Activated CD4-positive, alpha-beta memory T cell treated with anti-CD3 and anti-CD28 coated beads for 36 hours (primary cell): ENCODE measurements at regions of chr11 and their contacts with region 1.

Region 1: DNA sequence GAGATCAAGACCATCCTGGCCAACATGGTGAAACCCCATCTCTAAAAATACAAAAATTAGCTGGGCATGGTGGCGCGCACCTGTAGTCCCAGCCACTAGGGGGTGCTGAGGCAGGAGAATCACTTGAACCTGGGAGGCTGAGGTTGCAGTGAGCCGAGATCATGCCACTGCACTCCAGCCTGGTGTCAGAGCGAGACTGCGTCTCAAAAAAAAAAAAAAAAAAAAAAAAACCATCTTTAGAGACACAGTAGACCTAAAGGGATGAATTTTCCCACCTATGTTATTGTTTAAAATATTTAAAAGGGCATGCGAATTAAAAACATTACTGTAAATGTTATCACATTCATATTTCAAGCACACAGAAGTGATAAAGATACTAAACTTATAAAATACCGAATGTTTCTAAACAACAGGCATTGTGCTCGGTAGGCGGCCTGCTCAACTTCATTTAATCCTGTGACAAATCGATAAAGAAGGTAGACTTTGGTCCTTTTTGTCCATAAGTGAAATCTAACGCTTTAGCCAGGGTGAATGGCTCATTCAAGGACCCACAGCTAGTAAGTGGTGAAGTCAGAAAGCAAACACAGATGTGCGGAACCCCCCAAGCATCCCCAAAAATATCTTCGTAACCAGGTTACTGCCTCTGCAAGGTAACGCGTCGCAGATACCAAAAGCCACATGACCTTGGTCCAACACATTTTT is 16.1 kb downstream of the NCAPD3 start:
- DNase-seq: peak; percentile 76
- H3K4me3 Mint-ChIP-seq: no peak overlapping the region
- H3K27ac Mint-ChIP-seq: no peak overlapping the region
- H3K4me1 Mint-ChIP-seq: peaks cover 2% of the 10 kb centered on the region
- H3K27me3 Mint-ChIP-seq: no peaks in the 10 kb centered on the region

Region 2: GRCh38 chr11:134196756-134197155 is 10.9 kb before region 1 on chr11:
- CTCF ChIA-PET with region 1: interaction called, 12 read pairs
- POLR2A ChIA-PET with region 1: no interaction called
- intact Hi-C with region 1: no loop called
- DNase-seq: no peak
- H3K4me3 Mint-ChIP-seq: no peak overlapping the region
- H3K27ac Mint-ChIP-seq: no peak overlapping the region
- H3K4me1 Mint-ChIP-seq: peaks cover 5% of the 10 kb centered on the region
- H3K27me3 Mint-ChIP-seq: no peaks in the 10 kb centered on the region

Region 3: DNA sequence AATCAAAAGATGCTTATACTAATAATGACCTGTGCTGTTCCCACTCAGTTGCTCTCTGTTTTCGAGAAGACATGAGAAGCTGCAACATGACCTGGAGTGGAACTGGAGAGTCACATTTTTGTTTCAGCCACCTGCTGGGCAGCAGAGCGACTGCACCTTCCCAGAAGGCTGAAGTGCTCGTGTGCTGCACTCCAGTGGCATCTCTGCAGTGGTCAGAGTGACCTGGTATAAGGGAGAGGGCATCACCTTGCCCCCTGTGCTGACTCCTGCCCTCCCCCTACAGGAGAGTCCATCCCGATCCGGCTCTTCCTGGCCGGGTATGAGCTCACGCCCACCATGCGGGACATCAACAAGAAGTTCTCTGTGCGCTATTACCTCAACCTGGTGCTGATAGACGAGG is 37.0 kb after region 1 on chr11:
- CTCF ChIA-PET with region 1: interaction called, 17 read pairs
- POLR2A ChIA-PET with region 1: interaction called, 3 read pairs
- intact Hi-C with region 1: no loop called
- DNase-seq: no peak
- H3K4me3 Mint-ChIP-seq: no peak overlapping the region
- H3K27ac Mint-ChIP-seq: no peak overlapping the region
- H3K4me1 Mint-ChIP-seq: peaks cover 12% of the 10 kb centered on the region
- H3K27me3 Mint-ChIP-seq: no peaks in the 10 kb centered on the region

Region 4: GRCh38 chr11:134634897-134635831 is 427.5 kb after region 1 on chr11:
- CTCF ChIA-PET with region 1: no interaction called
- POLR2A ChIA-PET with region 1: no interaction called
- intact Hi-C with region 1: no loop called
- DNase-seq: no peak
- H3K4me3 Mint-ChIP-seq: no peak overlapping the region
- H3K27ac Mint-ChIP-seq: no peak overlapping the region
- H3K4me1 Mint-ChIP-seq: no peaks in the 10 kb centered on the region
- H3K27me3 Mint-ChIP-seq: peaks cover 3% of the 10 kb centered on the region